ENCODE measurements at regions of chr2 and their contacts with region 1.

Region 1: GRCh38 chr2:181742922-181743722 is 62.8 kb upstream of the NEUROD1 start:
- DNase-seq: no peak
- ATAC-seq: no peak
- H3K4me3 ChIP-seq: no peak overlapping the region
- H3K27ac ChIP-seq: no peak overlapping the region
- H3K4me1 ChIP-seq: no peaks in the 10 kb centered on the region
- H3K27me3 ChIP-seq: peaks cover 0 to 2% of the 10 kb centered on the region in 2 donors

Region 2: GRCh38 chr2:181891258-181891965 is 148.3 kb after region 1 on chr2 and contains the start of gene ITPRID2:
- intact Hi-C with region 1: loop called in 1 of 2 experiments (anchors 5 kb)
- DNase-seq: peak; percentile 92 to 94
- ATAC-seq: peak; percentile 97
- H3K4me3 ChIP-seq: peak within 1 kb of the TSS; percentile 85 to 86
- H3K27ac ChIP-seq: peak within 1 kb of the TSS; percentile 93 to 95
- H3K4me1 ChIP-seq: peaks cover 0 to 7% of the 10 kb centered on the region in 2 donors
- H3K27me3 ChIP-seq: no peaks in the 10 kb centered on the region
- total RNA-seq, gene ITPRID2: 119 to 145 TPM

Region 3: GRCh38 chr2:181904022-181904632 is 161.0 kb after region 1 on chr2:
- intact Hi-C with region 1: loop called in 1 of 2 experiments (anchors 5 kb)
- DNase-seq: no peak
- ATAC-seq: no peak
- H3K4me3 ChIP-seq: no peak overlapping the region
- H3K27ac ChIP-seq: no peak overlapping the region
- H3K4me1 ChIP-seq: peaks cover 0 to 2% of the 10 kb centered on the region in 2 donors
- H3K27me3 ChIP-seq: no peaks in the 10 kb centered on the region

Region 4: DNA sequence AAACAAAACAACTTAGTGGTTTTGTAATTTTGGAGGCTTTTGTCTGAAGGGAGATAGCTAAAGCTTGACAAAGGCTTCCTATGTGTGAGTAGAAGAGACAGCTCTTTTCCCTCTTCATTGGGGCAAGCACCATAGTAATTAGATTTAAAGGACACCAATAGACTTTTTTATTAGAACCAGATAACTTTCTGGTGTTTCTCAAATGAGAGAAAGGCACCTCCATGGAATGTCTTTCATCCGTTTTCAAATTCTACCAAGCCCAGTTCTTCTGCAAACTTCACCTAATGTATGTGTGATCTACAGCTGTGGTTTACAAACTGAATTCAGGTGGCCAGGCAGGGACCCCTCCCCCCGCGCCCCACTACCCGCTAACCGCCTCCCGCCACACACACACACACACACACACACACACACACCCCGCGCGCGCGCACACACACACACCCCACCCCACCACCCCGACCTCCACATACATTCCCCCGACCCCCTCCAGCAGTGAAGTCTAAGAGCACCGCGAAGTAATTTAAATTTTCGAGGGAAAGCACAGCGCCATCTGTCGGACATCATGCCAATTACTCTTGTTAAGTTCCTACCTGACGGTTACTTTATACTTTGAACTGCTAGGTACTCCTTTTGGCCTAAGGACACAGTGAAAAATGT is 210.9 kb after region 1 on chr2:
- intact Hi-C with region 1: loop called (anchors 2 to 5 kb)
- DNase-seq: peak; percentile 58 to 76
- ATAC-seq: peak; percentile 75
- H3K4me3 ChIP-seq: peak overlapping the region; percentile 16 to 29
- H3K27ac ChIP-seq: no peak overlapping the region
- H3K4me1 ChIP-seq: no peaks in the 10 kb centered on the region
- H3K27me3 ChIP-seq: no peaks in the 10 kb centered on the region

Region 5: DNA sequence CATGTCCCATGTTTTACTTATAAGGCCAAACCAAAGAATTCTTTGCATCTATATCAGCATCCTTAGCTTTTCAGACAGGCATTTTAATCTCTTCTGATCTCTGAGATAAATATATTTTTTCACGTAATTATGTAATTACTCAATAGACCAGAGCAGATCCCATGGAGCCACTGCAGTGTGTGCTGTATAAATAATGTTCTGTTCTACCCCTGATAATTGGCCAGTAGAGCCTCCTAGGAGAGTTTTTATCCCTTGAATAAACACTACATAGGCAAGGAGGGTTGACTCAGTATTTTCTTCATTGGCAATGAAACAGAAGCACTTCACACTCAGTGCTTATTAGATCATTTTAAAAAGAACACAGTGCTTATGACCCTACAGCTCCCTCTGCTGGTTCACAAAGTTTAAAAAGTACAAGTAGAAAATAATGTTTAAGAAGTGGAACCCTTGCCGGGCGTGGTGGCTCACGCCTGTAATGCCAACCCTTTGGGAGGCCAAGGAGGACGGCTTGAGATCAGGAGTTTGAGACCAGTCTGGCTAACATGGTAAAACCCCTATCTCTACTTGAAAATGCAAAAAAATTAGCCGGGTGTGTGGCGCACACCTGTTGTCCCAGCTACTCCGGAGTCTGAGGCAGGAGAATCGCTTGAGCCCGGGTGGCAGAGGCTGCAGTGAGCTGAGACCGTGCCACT is 334.5 kb after region 1 on chr2:
- intact Hi-C with region 1: loop called (anchors 2 kb)
- DNase-seq: no peak
- ATAC-seq: peak; percentile 89
- H3K4me3 ChIP-seq: no peak overlapping the region
- H3K27ac ChIP-seq: no peak overlapping the region
- H3K4me1 ChIP-seq: no peaks in the 10 kb centered on the region
- H3K27me3 ChIP-seq: no peaks in the 10 kb centered on the region

Region 6: DNA sequence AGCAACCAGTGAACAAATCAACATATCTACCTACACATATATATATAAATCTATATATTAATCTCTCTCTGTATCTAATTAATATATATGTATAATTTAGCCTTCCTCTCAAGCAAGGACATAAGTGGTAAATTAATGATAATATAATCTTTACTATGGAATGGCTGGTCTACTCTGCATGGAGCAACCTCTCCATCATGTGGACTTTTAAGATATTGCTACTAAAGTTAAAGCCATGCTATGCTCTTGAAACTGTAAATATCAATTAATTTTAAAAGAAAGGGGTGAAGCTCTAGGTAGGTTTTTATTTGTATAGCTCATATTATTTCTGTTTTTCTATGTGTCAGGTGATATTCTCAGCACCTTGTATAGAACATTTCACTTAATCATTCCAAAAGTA is 389.5 kb after region 1 on chr2:
- intact Hi-C with region 1: loop called in 1 of 2 experiments (anchors 5 kb)
- DNase-seq: no peak
- ATAC-seq: no peak
- H3K4me3 ChIP-seq: no peak overlapping the region
- H3K27ac ChIP-seq: no peak overlapping the region
- H3K4me1 ChIP-seq: peaks cover 0 to 3% of the 10 kb centered on the region in 2 donors
- H3K27me3 ChIP-seq: no peaks in the 10 kb centered on the region